Activated CD4-positive, alpha-beta memory T cell treated with anti-CD3 and anti-CD28 coated beads for 36 hours (primary cell): ENCODE measurements at regions of chr17 and their contacts with region 1.

Region 1: GRCh38 chr17:29116804-29117772 is 63.1 kb downstream of the MYO18A start:
- DNase-seq: peak; percentile 87
- H3K4me3 Mint-ChIP-seq: no peak overlapping the region
- H3K27ac Mint-ChIP-seq: no peak overlapping the region
- H3K4me1 Mint-ChIP-seq: peaks cover 4% of the 10 kb centered on the region
- H3K27me3 Mint-ChIP-seq: no peaks in the 10 kb centered on the region

Region 2: GRCh38 chr17:28967221-28968140 is 149.6 kb before region 1 on chr17:
- CTCF ChIA-PET with region 1: interaction called, 475 read pairs
- POLR2A ChIA-PET with region 1: no interaction called
- intact Hi-C with region 1: loop called (anchors 2 kb)
- DNase-seq: no peak
- H3K4me3 Mint-ChIP-seq: no peak overlapping the region
- H3K27ac Mint-ChIP-seq: no peak overlapping the region
- H3K4me1 Mint-ChIP-seq: no peaks in the 10 kb centered on the region
- H3K27me3 Mint-ChIP-seq: peaks cover 13% of the 10 kb centered on the region

Region 3: DNA sequence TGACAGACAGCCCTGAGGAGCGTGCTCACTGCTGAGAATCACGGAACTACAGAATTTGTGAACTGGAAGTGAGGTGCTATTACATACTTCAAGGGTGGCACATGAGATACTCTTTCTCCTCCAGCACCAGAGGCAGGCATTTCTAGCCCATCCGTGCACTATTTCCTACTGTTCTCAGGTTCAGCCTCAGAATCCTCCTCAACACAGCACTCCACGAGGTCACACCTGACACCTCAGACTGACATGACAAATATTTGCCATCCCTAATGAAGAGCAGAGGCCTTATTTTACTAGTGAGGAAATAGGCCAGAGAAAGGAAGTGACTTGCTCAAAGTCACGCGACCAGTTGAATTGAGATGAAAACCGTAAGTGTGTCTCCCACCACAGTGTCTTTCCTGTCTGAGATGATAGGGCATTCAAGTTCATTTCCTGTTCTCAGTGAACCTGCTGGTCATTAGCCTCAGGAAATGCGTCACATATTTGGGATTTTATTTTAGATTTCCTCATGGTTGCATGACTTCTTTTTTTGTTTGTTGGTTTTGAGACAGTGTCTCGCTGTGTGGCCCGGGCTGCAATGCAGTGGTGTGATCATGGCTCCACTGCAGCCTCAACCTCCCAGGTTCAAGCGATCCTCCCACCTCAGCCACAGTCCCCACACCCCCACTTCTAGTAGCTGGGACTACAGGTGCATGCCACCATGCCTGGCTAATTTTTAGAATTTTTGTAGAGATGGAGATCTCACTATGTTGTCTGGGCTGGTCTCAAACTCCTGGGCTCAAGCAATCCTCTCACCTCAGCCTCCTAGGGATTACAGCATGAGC is 134.7 kb before region 1 on chr17:
- CTCF ChIA-PET with region 1: interaction called, 12 read pairs
- POLR2A ChIA-PET with region 1: no interaction called
- intact Hi-C with region 1: no loop called
- DNase-seq: peak; percentile 66
- H3K4me3 Mint-ChIP-seq: no peak overlapping the region
- H3K27ac Mint-ChIP-seq: peak overlapping the region; percentile 82
- H3K4me1 Mint-ChIP-seq: peaks cover 19% of the 10 kb centered on the region
- H3K27me3 Mint-ChIP-seq: no peaks in the 10 kb centered on the region

Region 4: DNA sequence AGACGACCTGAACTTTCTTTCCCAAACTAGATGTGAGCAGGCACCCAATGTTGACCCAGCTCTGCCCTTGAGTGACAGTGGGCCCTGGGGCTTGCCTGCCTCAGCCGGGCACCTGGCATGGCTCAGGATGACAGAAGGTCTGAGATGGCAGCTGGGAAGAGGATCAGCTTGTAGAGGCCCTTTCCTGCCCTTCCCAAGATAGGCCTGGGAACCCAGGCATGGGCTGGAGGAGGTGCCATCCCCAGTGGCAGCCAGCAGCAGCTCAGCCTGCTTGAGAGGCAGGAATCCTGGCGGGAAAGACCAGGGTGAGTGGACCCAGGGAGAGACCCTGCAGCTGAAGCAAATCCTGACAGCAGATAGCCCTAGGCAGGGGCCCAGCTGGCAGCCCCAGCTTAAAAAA is 15.0 kb before region 1 on chr17:
- CTCF ChIA-PET with region 1: interaction called, 37 read pairs
- POLR2A ChIA-PET with region 1: no interaction called
- intact Hi-C with region 1: no loop called
- DNase-seq: no peak
- H3K4me3 Mint-ChIP-seq: no peak overlapping the region
- H3K27ac Mint-ChIP-seq: no peak overlapping the region
- H3K4me1 Mint-ChIP-seq: no peaks in the 10 kb centered on the region
- H3K27me3 Mint-ChIP-seq: no peaks in the 10 kb centered on the region

Region 5: GRCh38 chr17:29180034-29180787 is 63.1 kb after region 1 on chr17 and contains the start of gene MYO18A:
- CTCF ChIA-PET with region 1: interaction called, 32 read pairs
- POLR2A ChIA-PET with region 1: no interaction called
- intact Hi-C with region 1: no loop called
- DNase-seq: peak; percentile 86
- H3K4me3 Mint-ChIP-seq: peak within 1 kb of the TSS; percentile 56
- H3K27ac Mint-ChIP-seq: no peak within 1 kb of the TSS
- H3K4me1 Mint-ChIP-seq: peaks cover 36% of the 10 kb centered on the region
- H3K27me3 Mint-ChIP-seq: peaks cover 2% of the 10 kb centered on the region
- total RNA-seq, gene MYO18A: 46.3 to 47.1 TPM